CD14-positive monocyte (primary cell): ENCODE measurements at regions of chr19 and their contacts with region 1.

Region 1: GRCh38 chr19:1789261-1790041 is 22.6 kb downstream of the ATP8B3 start:
- DNase-seq: no peak
- H3K4me3 ChIP-seq: peak overlapping the region in 1 of 3 experiments; percentile 47
- H3K4me3 Mint-ChIP-seq: peak overlapping the region in 1 of 2 donors; percentile 42
- H3K27ac ChIP-seq: no peak overlapping the region
- H3K27ac Mint-ChIP-seq: no peak overlapping the region
- H3K4me1 ChIP-seq: peaks cover 0 to 6% of the 10 kb centered on the region in 2 donors
- H3K4me1 Mint-ChIP-seq: no peaks in the 10 kb centered on the region
- H3K27me3 ChIP-seq: peaks cover 0 to 7% of the 10 kb centered on the region in 2 donors
- H3K27me3 Mint-ChIP-seq: peaks cover 8 to 41% (median 18%) of the 10 kb centered on the region in 3 donors
- CTCF ChIP-seq: no peak

Region 2: DNA sequence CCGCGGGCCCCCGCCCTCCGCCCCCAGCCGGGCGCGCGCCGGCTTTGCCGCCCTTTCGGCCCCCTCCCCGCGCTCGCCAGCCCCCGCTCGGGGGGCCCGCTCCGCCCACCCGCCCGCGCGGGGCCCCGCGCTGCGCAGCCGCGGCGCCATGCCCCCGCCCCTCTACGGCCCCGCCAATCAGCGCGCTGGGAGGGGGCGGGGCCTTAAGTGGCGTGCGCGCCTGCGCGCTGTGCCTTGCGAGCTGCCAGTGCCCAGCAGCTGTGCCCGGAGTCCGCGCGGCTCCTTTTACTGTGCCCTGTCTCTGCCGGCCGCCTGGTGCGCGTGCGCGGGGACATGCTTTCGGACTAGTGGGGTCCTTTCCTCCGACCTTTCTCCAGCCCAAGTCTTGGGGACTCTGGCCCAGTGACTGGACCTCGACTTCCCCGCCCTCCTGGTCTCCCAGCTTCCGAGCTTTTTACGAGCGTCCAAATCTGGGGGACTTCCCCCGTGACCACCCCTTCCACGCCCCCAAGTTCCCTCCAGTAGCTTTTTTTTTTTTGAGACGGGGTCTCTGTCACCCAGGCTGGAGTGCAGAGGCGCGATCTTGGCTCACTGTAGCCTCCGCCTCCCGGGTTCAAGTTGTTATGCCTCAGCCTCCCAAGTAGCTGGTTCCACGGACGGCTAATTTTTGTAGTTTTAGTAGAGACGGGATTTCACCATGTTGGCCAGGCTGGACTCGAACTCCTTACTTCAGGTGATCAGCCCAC is 196.5 kb before region 1 on chr19 and contains the start of gene MBD3:
- intact Hi-C with region 1: no loop called
- DNase-seq: peak; percentile 94 to 96 (median 94)
- H3K4me3 ChIP-seq: peak within 1 kb of the TSS; percentile 63 to 87 (median 78)
- H3K4me3 Mint-ChIP-seq: peak within 1 kb of the TSS; percentile 90 to 94
- H3K27ac ChIP-seq: peak within 1 kb of the TSS; percentile 86 to 90
- H3K27ac Mint-ChIP-seq: peak within 1 kb of the TSS; percentile 82 to 95 (median 88)
- H3K4me1 ChIP-seq: peaks cover 28 to 36% of the 10 kb centered on the region in 2 donors
- H3K4me1 Mint-ChIP-seq: peaks cover 28% of the 10 kb centered on the region
- H3K27me3 ChIP-seq: no peaks in the 10 kb centered on the region
- H3K27me3 Mint-ChIP-seq: peaks cover 0 to 2% (median 0%) of the 10 kb centered on the region in 3 donors
- CTCF ChIP-seq: no peak
- polyA plus RNA-seq, gene MBD3: 2.6 to 35.3 (median 4.9) TPM

Region 3: DNA sequence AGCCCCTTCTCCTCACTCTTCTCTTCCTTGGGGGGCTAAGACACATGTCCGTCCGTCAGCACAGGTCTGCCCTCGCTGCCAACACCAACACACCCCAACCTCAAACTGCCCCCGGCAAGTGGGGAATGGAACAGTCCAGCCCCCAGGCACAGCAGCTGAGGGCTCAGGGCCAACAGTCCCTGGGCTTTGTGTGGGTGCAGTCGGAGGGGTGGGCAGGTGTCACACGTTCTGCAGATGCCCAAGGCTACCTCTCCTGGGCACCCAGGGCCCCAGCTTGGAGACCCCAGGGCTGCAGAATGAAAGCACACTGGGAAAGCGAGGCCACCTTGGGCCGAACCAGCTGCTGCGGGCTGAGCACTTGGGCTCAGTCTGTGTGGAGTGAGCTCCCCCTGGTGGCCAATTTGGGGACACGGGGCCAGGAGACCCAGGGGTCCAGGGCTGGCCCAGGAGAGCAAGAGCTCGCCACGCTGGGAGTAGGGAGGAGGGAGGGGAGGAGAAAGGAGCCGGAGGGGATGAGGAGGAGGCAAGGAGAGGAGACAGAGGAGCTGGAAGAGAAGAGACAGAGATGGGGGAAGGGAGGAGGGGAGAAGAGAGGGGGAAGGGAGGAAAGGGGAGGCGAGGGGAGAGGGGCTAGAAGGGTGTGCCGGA is 36.6 kb after region 1 on chr19:
- intact Hi-C with region 1: loop called in 1 of 2 experiments (anchors 5 kb)
- DNase-seq: peak; percentile 58 to 67 (median 60)
- H3K4me3 ChIP-seq: no peak overlapping the region
- H3K4me3 Mint-ChIP-seq: no peak overlapping the region
- H3K27ac ChIP-seq: no peak overlapping the region
- H3K27ac Mint-ChIP-seq: peak overlapping the region in 1 of 7 donors; percentile 52
- H3K4me1 ChIP-seq: no peaks in the 10 kb centered on the region
- H3K4me1 Mint-ChIP-seq: no peaks in the 10 kb centered on the region
- H3K27me3 ChIP-seq: no peaks in the 10 kb centered on the region
- H3K27me3 Mint-ChIP-seq: peaks cover 0 to 1% (median 0%) of the 10 kb centered on the region in 3 donors
- CTCF ChIP-seq: peak; percentile 83